CD4-positive, alpha-beta T cell (primary cell): ENCODE measurements at regions of chr19 and their contacts with region 1.

Region 1: DNA sequence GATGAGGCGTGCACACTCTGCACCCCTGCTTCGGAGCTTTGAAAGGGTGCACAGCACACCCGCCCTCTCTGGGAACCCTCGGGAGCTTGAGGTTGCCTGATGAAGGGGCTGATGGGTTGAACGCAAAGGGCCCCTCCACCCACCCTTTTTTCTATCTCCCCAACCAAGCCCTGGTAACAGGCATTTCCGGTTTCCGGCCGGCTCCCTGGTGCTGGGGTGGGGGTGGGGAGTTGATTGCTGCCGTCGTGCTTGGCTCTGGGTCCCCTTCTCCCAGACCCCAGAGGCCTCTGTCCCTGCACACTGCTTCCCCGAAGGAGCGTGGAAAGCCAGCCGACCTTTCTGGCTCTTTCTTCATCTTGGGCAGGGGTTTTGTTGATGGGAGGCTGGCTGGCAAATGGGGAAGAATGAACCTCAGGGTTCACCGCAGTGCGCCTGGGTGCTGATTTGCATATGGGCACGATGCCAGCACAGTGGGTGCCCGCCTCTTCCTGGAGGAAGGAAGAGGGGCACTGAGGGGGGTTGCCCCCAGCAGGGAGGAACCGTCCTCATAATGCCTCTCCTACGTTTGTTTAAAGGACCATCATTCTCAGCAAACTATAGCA is 29.1 kb downstream of the VAV1 start:
- DNase-seq: peak; percentile 55 to 92 (median 78)
- ATAC-seq: peak; percentile 84
- H3K4me3 ChIP-seq: peak overlapping the region; percentile 49
- H3K4me3 Mint-ChIP-seq: peak overlapping the region; percentile 91
- H3K27ac ChIP-seq: peak overlapping the region; percentile 43 to 92
- H3K27ac Mint-ChIP-seq: peak overlapping the region; percentile 93
- H3K4me1 ChIP-seq: peaks cover 76% of the 10 kb centered on the region
- H3K4me1 Mint-ChIP-seq: peaks cover 69% of the 10 kb centered on the region
- H3K27me3 ChIP-seq: no peaks in the 10 kb centered on the region
- H3K27me3 Mint-ChIP-seq: no peaks in the 10 kb centered on the region
- CTCF ChIP-seq: no peak

Region 2: GRCh38 chr19:6790194-6791128 is 11.1 kb before region 1 on chr19:
- CTCF ChIA-PET with region 1: no interaction called
- POLR2A ChIA-PET with region 1: interaction called, 11 read pairs
- intact Hi-C with region 1: no loop called
- DNase-seq: no peak
- ATAC-seq: peak; percentile 52
- H3K4me3 ChIP-seq: no peak overlapping the region
- H3K4me3 Mint-ChIP-seq: peak overlapping the region; percentile 45
- H3K27ac ChIP-seq: no peak overlapping the region
- H3K27ac Mint-ChIP-seq: peak overlapping the region; percentile 80
- H3K4me1 ChIP-seq: peaks cover 59% of the 10 kb centered on the region
- H3K4me1 Mint-ChIP-seq: peaks cover 73% of the 10 kb centered on the region
- H3K27me3 ChIP-seq: no peaks in the 10 kb centered on the region
- H3K27me3 Mint-ChIP-seq: no peaks in the 10 kb centered on the region
- CTCF ChIP-seq: no peak

Region 3: GRCh38 chr19:6811906-6812305 is 10.3 kb after region 1 on chr19:
- CTCF ChIA-PET with region 1: interaction called, 18 read pairs
- POLR2A ChIA-PET with region 1: interaction called, 30 read pairs
- intact Hi-C with region 1: no loop called
- DNase-seq: peak in 3 of 14 experiments; percentile 29 to 64 (median 54)
- ATAC-seq: no peak
- H3K4me3 ChIP-seq: no peak overlapping the region
- H3K4me3 Mint-ChIP-seq: peak overlapping the region; percentile 26
- H3K27ac ChIP-seq: peak overlapping the region in 1 of 2 donors; percentile 29
- H3K27ac Mint-ChIP-seq: peak overlapping the region; percentile 86
- H3K4me1 ChIP-seq: peaks cover 58% of the 10 kb centered on the region
- H3K4me1 Mint-ChIP-seq: peaks cover 79% of the 10 kb centered on the region
- H3K27me3 ChIP-seq: no peaks in the 10 kb centered on the region
- H3K27me3 Mint-ChIP-seq: no peaks in the 10 kb centered on the region
- CTCF ChIP-seq: no peak

Region 4: GRCh38 chr19:6837525-6837924 is 35.9 kb after region 1 on chr19:
- CTCF ChIA-PET with region 1: no interaction called
- POLR2A ChIA-PET with region 1: no interaction called
- intact Hi-C with region 1: no loop called
- DNase-seq: no peak
- ATAC-seq: no peak
- H3K4me3 ChIP-seq: no peak overlapping the region
- H3K4me3 Mint-ChIP-seq: no peak overlapping the region
- H3K27ac ChIP-seq: peak overlapping the region in 1 of 2 donors; percentile 14
- H3K27ac Mint-ChIP-seq: peak overlapping the region; percentile 59
- H3K4me1 ChIP-seq: no peaks in the 10 kb centered on the region
- H3K4me1 Mint-ChIP-seq: peaks cover 13% of the 10 kb centered on the region
- H3K27me3 ChIP-seq: no peaks in the 10 kb centered on the region
- H3K27me3 Mint-ChIP-seq: no peaks in the 10 kb centered on the region
- CTCF ChIP-seq: no peak

Region 5: DNA sequence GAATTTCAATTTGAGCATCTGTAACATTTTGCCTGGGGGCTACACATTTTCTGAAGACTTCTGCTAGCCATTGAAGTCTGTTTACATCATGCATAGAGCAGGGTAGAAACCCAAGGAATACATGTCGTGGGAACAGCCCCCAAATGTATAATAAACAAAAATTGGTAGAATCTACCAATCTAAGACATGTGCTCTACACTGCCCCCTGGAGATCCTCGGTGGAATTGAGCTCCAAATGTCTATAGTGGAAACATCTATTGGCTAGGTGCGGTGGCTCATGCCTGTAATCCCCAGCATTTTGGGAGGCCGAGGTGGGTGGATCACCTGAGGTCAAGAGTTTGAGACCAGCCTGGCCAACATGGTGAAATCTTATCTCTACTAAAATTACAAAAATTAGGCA is 162.4 kb after region 1 on chr19:
- CTCF ChIA-PET with region 1: no interaction called
- POLR2A ChIA-PET with region 1: no interaction called
- intact Hi-C with region 1: no loop called
- DNase-seq: peak; percentile 20 to 70 (median 34)
- ATAC-seq: no peak
- H3K4me3 ChIP-seq: no peak overlapping the region
- H3K4me3 Mint-ChIP-seq: no peak overlapping the region
- H3K27ac ChIP-seq: no peak overlapping the region
- H3K27ac Mint-ChIP-seq: no peak overlapping the region
- H3K4me1 ChIP-seq: peaks cover 3% of the 10 kb centered on the region
- H3K4me1 Mint-ChIP-seq: peaks cover 6% of the 10 kb centered on the region
- H3K27me3 ChIP-seq: no peaks in the 10 kb centered on the region
- H3K27me3 Mint-ChIP-seq: no peaks in the 10 kb centered on the region
- CTCF ChIP-seq: peak; percentile 64